ENCODE measurements at regions of chr4 and their contacts with region 1.

Region 1: GRCh38 chr4:5050520-5051277 is 581 bp upstream of the STK32B start:
- DNase-seq: peak; percentile 76
- ATAC-seq: peak; percentile 88 to 92

Region 2: DNA sequence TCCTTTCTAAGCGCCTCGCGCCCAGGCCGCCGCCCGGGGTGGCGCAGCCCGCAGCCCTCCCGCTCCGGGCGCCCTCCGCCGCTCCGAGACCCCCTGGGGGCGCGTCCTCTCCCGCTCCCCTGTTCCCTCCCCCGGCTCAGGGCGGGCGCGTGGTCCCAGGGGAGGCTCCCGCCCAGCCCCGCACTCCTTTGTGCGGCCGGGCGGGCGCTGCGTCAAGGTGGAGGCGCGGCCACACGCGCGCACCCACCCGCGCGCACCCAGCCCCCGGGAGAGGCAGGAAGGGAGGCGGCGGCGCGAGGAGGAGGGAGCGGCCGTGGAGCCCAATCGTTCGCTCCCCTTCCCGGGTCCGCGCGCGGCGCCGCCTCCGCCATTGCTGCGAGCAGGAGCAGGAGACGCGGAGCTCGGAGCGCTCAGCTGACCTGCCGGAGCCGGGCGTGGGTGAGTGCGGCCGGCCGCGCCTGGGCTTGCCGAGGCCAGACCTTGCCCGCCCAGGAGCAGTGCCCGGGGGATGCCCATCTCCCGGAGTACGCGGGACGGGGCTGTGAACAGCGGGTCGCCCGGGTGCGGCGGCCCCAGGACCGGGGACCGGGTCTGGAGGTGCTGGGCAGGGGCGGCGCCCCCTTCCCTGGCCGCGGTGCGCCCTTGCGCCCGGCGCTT is 663.8 kb before region 1 on chr4 and contains the start of gene NSG1:
- intact Hi-C with region 1: no loop called
- DNase-seq: peak; percentile 55
- ATAC-seq: peak; percentile 66 to 84
- total RNA-seq, gene NSG1: 10.1 to 16.8 TPM

Region 3: GRCh38 chr4:5798462-5798861 is 747.8 kb after region 1 on chr4:
- intact Hi-C with region 1: loop called in 1 of 2 experiments (anchors 10 kb)
- DNase-seq: no peak
- ATAC-seq: peak; percentile 81 to 83

Region 4: DNA sequence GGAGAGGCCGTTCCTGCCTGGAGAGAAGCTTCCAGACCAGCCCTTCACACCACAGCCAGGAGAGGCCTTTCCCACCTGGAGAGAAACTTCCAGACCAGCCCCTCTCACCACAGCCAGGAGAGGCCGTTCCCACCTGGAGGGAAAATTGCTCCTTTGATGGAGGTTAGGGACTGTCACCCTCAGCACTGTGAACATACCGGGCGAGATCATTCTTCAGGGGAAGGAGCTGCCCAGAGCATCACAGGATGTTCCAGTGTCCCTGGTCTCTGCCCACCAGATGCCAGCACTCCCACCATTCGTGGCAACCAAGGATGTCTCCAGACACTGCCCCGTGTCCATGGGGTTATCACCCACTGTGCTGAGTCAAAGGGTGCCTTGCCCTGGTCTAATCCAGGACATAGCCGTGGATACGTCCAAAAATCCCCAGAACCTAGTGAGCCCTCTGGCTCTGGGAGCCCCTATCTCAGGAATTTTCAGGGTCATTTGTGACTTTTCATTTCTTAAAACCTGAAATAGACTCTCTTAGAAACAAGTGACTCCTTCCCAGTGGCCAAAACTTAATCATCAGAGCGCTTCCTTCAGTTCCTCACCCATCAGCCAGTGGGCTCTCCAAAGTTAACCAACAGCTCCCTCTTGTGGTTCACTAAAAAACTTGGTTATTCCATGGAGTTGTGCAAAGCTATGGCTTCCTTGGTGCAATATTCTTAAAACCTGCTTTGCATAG is 762.0 kb after region 1 on chr4:
- intact Hi-C with region 1: loop called in 1 of 2 experiments (anchors 2 kb)
- DNase-seq: no peak
- ATAC-seq: peak; percentile 68 to 81